Heart left ventricle (tissue), 16 donors: ENCODE measurements at regions of chr15 and their contacts with region 1.

Region 1: DNA sequence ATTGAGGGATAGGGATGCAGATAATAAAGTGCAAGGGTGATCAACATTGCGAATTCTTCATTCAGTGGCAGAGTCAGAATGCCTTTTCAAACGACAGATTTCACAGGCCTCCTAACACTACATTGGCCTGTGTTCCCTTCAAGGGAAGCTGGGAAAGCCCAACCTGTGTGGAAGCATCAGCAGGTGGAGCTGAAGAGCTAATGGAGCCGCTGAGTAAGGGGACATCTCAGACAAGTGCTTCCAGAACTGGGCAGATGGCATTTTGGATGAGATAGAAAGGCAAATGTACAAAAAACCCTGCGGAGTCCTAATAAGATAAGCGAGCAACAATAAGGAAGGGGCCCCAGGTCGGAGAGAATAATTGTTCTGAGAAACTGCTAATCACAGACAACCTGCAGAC is 8.5 kb upstream of the SLC24A5 start:
- DNase-seq: no peak
- ATAC-seq: peak in 2 of 4 donors; percentile 60 to 70
- H3K4me3 ChIP-seq: no peak overlapping the region
- H3K27ac ChIP-seq: no peak overlapping the region
- H3K4me1 ChIP-seq: no peaks in the 10 kb centered on the region
- H3K27me3 ChIP-seq: peaks cover 0 to 5% (median 0%) of the 10 kb centered on the region in 9 donors
- CTCF ChIP-seq: peak in 9 of 12 donors; percentile 19 to 52 (median 40)
- POLR2A ChIP-seq: no peak

Region 2: DNA sequence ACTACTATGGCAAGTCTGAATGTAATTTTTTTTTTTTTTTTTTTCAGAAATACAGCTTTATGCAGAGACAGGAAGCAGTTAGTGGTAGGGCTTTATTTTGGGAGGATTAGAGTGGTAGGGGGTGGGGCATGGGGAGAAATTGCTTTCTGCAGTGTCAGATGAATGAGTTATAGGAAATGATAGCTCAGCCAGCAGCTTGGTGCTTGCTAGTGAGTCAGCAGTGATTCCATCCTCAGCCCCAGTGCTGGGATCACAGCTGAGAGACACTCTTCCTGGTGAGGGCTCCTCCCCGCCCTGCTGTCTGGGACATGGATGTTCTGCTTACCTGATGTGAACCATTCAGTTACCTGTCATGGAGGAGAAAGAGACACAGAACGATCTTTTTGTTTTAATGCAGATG is 355.4 kb before region 1 on chr15:
- intact Hi-C with region 1: no loop called
- DNase-seq: peak in 1 of 5 donors; percentile 47
- ATAC-seq: peak; percentile 15 to 85 (median 66)
- H3K4me3 ChIP-seq: no peak overlapping the region
- H3K27ac ChIP-seq: no peak overlapping the region
- H3K4me1 ChIP-seq: peaks cover 0 to 16% (median 0%) of the 10 kb centered on the region in 12 donors
- H3K27me3 ChIP-seq: no peaks in the 10 kb centered on the region
- CTCF ChIP-seq: no peak
- POLR2A ChIP-seq: no peak

Region 3: DNA sequence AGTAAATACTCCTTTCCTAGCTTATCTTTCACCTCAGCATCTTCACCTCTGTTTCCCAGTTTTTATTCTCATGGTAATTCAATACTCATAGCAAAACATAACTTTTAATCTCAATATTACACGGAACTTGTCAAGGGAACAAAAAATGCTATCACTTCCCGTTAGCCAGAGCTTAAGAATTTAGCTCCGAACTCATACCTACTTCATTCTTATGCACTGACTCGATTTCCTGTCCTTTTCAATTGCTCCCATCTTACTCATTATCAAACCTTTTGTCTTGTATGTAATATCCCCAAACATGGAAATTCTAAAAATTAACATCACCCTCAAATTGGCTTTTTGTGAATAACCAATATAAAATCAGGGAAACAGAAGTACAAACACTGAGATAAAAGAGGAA is 37.6 kb after region 1 on chr15:
- intact Hi-C with region 1: no loop called
- DNase-seq: no peak
- ATAC-seq: no peak
- H3K4me3 ChIP-seq: no peak overlapping the region
- H3K27ac ChIP-seq: no peak overlapping the region
- H3K4me1 ChIP-seq: peaks cover 0 to 3% (median 0%) of the 10 kb centered on the region in 12 donors
- H3K27me3 ChIP-seq: no peaks in the 10 kb centered on the region
- CTCF ChIP-seq: no peak
- POLR2A ChIP-seq: no peak

Region 4: DNA sequence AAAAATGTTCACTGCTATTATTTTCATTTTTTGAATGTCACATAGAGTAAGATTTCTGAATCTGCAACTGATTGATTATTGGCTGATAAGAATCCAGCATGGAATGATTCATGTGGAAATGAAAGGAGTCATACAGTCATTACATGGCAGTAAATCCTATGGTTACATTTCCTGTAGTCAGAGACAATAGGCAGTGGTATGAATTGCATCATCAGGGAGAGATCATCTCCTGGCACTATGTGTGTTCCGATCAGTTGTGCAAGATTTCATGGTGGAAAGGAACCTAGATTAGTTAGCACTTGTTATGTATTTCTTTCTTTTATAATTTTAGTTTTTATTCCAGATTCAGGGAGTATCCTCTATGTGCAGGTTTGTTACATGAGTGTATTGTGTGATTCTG is 132.7 kb after region 1 on chr15:
- intact Hi-C with region 1: loop called in 4 of 10 experiments (anchors 5 to 10 kb)
- DNase-seq: no peak
- ATAC-seq: no peak
- H3K4me3 ChIP-seq: no peak overlapping the region
- H3K27ac ChIP-seq: no peak overlapping the region
- H3K4me1 ChIP-seq: no peaks in the 10 kb centered on the region
- H3K27me3 ChIP-seq: peaks cover 0 to 5% (median 0%) of the 10 kb centered on the region in 9 donors
- CTCF ChIP-seq: no peak
- POLR2A ChIP-seq: no peak

Region 5: GRCh38 chr15:48250640-48251076 is 138.4 kb after region 1 on chr15:
- intact Hi-C with region 1: loop called in 4 of 10 experiments (anchors 5 to 10 kb)
- DNase-seq: peak in 3 of 5 donors; percentile 9 to 31 (median 20)
- ATAC-seq: peak in 1 of 4 donors; percentile 28
- H3K4me3 ChIP-seq: no peak overlapping the region
- H3K27ac ChIP-seq: no peak overlapping the region
- H3K4me1 ChIP-seq: no peaks in the 10 kb centered on the region
- H3K27me3 ChIP-seq: peaks cover 0 to 5% (median 0%) of the 10 kb centered on the region in 9 donors
- CTCF ChIP-seq: peak; percentile 21 to 61 (median 49)
- POLR2A ChIP-seq: no peak

Region 6: DNA sequence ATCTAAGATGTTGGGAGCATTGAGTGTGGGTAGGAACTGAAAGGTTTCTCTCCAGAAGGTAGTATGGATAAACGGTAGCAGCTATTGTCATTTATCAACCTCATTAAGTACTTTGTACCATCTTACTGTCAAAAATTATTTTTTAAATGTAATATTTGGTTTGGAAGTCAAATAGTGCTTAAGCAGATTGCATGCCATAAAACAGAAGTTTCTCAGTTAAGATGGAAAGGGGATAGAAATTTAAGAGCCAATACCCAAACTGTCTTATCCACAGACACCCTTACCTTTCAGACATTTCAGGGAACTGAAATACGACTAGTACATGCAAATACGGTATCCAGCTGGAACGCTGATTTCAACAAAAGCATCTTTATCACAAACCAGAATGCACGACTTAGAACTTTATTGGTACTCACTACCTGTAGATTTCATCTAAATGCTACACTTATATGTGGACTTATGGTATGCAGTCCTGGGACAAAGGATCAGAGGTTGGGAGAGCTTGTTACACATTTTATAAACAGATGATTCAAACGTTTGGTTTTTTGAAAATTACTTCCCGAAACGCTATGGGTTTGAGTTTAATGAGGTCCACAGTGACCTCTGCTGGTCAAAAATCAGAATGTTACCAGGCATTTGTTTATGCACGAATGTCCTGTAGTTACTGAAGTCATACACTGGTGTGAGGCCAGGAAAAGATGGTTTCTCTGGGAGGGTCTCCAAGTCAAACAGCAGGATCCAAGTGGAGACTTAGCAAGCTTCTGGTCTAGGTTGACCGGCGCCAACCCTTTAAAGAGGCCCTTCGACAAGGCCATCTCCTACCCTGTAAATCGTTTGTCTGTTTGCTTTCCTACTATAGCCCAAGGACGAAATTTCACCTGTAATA is 173.3 kb after region 1 on chr15:
- intact Hi-C with region 1: loop called in 5 of 10 experiments (anchors 10 kb)
- DNase-seq: peak in 3 of 5 donors; percentile 28 to 41 (median 38)
- ATAC-seq: peak; percentile 45 to 80 (median 70)
- H3K4me3 ChIP-seq: peak overlapping the region in 8 of 12 donors; percentile 5 to 31 (median 28)
- H3K27ac ChIP-seq: no peak overlapping the region
- H3K4me1 ChIP-seq: peaks cover 0 to 22% (median 0%) of the 10 kb centered on the region in 12 donors
- H3K27me3 ChIP-seq: peaks cover 0 to 3% (median 0%) of the 10 kb centered on the region in 9 donors
- CTCF ChIP-seq: peak; percentile 59 to 84 (median 72)
- POLR2A ChIP-seq: no peak